SK-N-SH (cell line): ENCODE measurements at regions of chr20 and their contacts with region 1.

Region 1: DNA sequence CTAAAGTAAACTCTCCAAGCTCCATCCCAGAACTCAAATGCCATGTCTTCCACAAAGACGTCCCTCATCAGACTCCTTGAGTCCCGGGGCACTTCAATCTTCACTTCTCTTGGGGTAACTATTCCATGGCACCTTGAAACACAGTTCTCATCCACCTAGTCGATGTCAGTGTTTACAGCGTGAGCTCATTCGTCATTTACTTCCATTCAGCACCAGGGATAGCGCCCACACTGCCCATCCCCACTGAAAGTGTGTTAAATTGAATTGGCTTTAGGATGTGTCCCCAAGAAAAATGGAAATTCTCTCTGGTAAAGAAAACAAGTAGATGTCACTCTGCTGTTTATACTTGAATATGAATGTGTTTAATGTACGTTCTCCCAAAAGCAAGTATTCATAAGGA is 31.3 kb downstream of the KCNK15 start:
- DNase-seq: no peak
- H3K4me3 ChIP-seq: no peak overlapping the region
- H3K27ac ChIP-seq: no peak overlapping the region
- H3K4me1 ChIP-seq: peaks cover 0 to 23% of the 10 kb centered on the region in 2 experiments; a peak in 1 of 4 replicates
- H3K27me3 ChIP-seq: no peaks in the 10 kb centered on the region; the same call in 1 of the 2 replicates
- CTCF ChIP-seq: no peak
- EP300 ChIP-seq: no peak
- RAD21 ChIP-seq: no peak

Region 2: GRCh38 chr20:44765652-44766347 is 11.2 kb before region 1 on chr20:
- CTCF ChIA-PET with region 1: interaction called, 10 read pairs
- POLR2A ChIA-PET with region 1: no interaction called
- DNase-seq: no peak
- H3K4me3 ChIP-seq: no peak overlapping the region
- H3K27ac ChIP-seq: peak overlapping the region in 1 of 2 experiments; percentile 50; a peak in 2 of 4 replicates
- H3K4me1 ChIP-seq: peaks cover 0 to 43% of the 10 kb centered on the region in 2 experiments; a peak in 2 of 4 replicates
- H3K27me3 ChIP-seq: peaks cover 26% of the 10 kb centered on the region; the same call in 1 of the 2 replicates
- CTCF ChIP-seq: no peak
- EP300 ChIP-seq: no peak
- RAD21 ChIP-seq: no peak

Region 3: GRCh38 chr20:44832724-44833123 is 55.7 kb after region 1 on chr20:
- CTCF ChIA-PET with region 1: no interaction called
- POLR2A ChIA-PET with region 1: no interaction called
- DNase-seq: no peak
- H3K4me3 ChIP-seq: no peak overlapping the region
- H3K27ac ChIP-seq: no peak overlapping the region
- H3K4me1 ChIP-seq: no peaks in the 10 kb centered on the region; a peak in 1 of 4 replicates
- H3K27me3 ChIP-seq: peaks cover 23% of the 10 kb centered on the region
- CTCF ChIP-seq: no peak
- EP300 ChIP-seq: no peak
- RAD21 ChIP-seq: no peak